ENCODE measurements at regions of chr18 and their contacts with region 1.

Region 1: DNA sequence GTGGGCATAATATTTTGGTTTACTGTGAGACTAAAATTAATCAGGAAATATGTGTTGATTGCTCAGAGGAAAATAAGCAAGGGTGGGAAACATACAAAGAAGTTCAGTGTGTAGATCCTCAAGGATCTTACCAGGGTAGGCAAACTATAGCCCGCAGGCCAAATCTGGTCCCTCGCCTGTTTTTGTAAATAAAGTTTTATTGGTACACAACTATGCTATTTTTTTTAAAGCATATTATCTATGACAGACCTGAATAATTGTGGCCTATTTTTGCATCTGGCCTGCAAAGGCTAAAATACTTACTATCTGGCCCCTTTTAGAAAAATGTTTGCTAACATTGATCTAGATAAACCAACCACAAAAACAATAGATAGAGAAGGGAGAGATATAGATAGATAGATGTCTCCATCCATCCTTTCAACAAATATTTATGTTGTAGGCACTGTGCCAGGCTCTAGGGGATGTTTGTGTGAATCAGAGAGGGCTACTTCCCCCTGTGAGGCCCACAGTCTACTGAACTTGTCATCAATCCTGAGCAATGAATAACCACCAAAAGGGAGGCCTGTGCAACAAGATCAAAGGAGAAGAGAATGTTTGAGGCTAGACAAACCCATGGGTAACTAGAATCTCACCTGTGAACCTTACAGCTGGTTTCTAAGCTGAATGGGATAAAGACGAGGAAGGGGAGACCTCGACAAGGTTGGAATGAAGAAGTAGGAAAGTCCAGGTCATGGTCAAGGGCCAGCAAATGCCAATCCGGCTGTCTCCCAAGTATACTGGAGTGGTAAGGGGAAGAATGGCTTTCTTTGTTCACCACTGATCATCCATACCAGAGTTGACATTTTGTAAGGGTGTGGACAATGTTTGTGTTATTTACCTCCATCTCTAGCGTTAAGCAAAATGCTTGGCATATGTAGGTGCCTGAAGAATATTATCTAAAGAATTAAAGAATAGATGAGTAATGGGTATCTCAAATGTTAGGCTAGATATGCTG is 23.6 kb downstream of the ALPK2 start:
- DNase-seq: peak; percentile 76
- ATAC-seq: peak; percentile 84
- H3K4me3 Mint-ChIP-seq: no peak overlapping the region
- H3K27ac Mint-ChIP-seq: peak overlapping the region; percentile 35
- H3K4me1 Mint-ChIP-seq: peaks cover 56% of the 10 kb centered on the region
- H3K27me3 Mint-ChIP-seq: peaks cover 4% of the 10 kb centered on the region

Region 2: GRCh38 chr18:57943723-57944122 is 661.6 kb before region 1 on chr18:
- CTCF ChIA-PET with region 1: no interaction called
- POLR2A ChIA-PET with region 1: no interaction called
- intact Hi-C with region 1: no loop called
- DNase-seq: no peak
- ATAC-seq: no peak
- H3K4me3 Mint-ChIP-seq: no peak overlapping the region
- H3K27ac Mint-ChIP-seq: no peak overlapping the region
- H3K4me1 Mint-ChIP-seq: no peaks in the 10 kb centered on the region
- H3K27me3 Mint-ChIP-seq: peaks cover 13% of the 10 kb centered on the region

Region 3: DNA sequence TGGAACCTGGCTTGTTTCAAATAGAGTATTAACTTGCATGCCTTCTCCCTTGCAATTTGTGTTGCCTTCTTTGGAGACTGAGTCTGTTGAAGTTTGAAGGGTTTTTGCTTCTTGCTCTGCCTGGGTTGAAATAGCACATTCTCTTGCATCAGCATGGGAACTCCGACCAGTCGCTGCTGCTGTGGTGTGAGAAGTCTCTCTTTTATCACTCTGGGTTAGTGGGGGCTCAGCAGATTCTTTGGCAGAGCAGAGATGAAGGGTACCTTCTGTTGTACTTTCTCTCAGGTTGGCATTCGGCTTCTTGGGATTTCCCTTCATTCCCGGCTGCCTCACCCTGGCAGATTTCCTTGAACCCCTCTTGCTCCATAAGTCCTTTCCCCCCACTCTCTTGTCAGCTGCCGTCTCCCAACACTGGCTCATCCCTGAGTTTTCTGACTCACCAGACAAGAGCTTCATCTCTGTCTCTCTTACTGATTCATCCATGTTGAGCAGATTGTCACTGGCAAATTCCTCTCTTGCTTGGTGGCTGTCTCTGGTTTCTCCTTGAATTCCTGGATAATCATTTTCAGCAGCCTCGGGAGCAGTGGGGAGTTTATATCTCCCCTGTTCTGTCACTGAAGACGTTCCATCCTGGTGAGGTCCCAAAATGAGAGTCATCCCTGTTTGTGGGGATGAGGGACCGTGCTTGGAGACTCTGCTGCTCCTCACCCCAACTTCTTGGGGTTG is 26.3 kb before region 1 on chr18:
- CTCF ChIA-PET with region 1: no interaction called
- POLR2A ChIA-PET with region 1: no interaction called
- intact Hi-C with region 1: loop called in 1 of 2 experiments (anchors 2 kb)
- DNase-seq: peak; percentile 33
- ATAC-seq: peak; percentile 42
- H3K4me3 Mint-ChIP-seq: peak overlapping the region; percentile 44
- H3K27ac Mint-ChIP-seq: peak overlapping the region; percentile 60
- H3K4me1 Mint-ChIP-seq: peaks cover 20% of the 10 kb centered on the region
- H3K27me3 Mint-ChIP-seq: no peaks in the 10 kb centered on the region

Region 4: GRCh38 chr18:58687871-58688308 is 82.6 kb after region 1 on chr18:
- CTCF ChIA-PET with region 1: interaction called, 3 read pairs
- POLR2A ChIA-PET with region 1: no interaction called
- intact Hi-C with region 1: loop called in 1 of 2 experiments (anchors 2 kb)
- DNase-seq: peak; percentile 69
- ATAC-seq: peak; percentile 79
- H3K4me3 Mint-ChIP-seq: peak overlapping the region; percentile 64
- H3K27ac Mint-ChIP-seq: peak overlapping the region; percentile 92
- H3K4me1 Mint-ChIP-seq: peaks cover 83% of the 10 kb centered on the region
- H3K27me3 Mint-ChIP-seq: no peaks in the 10 kb centered on the region

Region 5: DNA sequence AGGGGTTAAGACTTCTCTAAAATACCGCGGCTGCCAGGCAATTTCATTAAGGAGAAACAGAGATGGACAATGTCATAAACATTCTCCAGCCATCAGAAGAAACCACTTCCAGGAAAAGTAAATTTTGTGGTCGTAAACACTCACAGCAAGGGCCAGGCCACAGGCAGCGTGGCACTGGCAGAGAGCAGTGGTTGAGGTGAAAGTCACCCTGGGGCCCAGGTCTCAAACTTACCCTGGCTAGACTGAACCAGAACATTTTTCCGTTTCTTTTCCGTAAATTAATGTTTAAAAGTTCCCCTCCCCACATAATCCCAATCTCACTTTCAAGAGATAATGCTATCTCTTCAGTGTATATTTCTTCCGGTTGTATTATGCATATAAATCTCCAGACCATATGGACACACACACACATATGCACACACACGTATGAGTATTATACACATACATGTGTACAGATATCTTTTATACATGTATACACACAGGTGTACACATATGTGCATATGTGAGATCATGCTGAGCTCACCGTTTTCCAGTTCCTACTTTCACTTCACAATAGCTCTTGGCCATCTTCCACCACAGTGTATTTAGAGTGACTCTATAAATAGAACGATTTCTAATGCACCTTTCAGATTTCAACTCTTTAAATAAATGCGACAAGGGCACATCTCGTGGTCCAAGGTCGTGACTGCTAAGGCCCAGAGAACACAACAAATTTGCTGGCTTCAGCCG is 156.1 kb after region 1 on chr18:
- CTCF ChIA-PET with region 1: interaction called, 3 read pairs
- POLR2A ChIA-PET with region 1: no interaction called
- intact Hi-C with region 1: loop called in 1 of 2 experiments (anchors 5 kb)
- DNase-seq: peak; percentile 27
- ATAC-seq: peak; percentile 53
- H3K4me3 Mint-ChIP-seq: no peak overlapping the region
- H3K27ac Mint-ChIP-seq: peak overlapping the region; percentile 2
- H3K4me1 Mint-ChIP-seq: peaks cover 13% of the 10 kb centered on the region
- H3K27me3 Mint-ChIP-seq: peaks cover 18% of the 10 kb centered on the region

Region 6: GRCh38 chr18:59035591-59035990 is 430.3 kb after region 1 on chr18:
- CTCF ChIA-PET with region 1: no interaction called
- POLR2A ChIA-PET with region 1: no interaction called
- intact Hi-C with region 1: loop called in 1 of 2 experiments (anchors 1 kb)
- DNase-seq: no peak
- ATAC-seq: no peak
- H3K4me3 Mint-ChIP-seq: no peak overlapping the region
- H3K27ac Mint-ChIP-seq: no peak overlapping the region
- H3K4me1 Mint-ChIP-seq: peaks cover 20% of the 10 kb centered on the region
- H3K27me3 Mint-ChIP-seq: peaks cover 9% of the 10 kb centered on the region

Measured in activated CD4-positive, alpha-beta T cell treated with anti-CD3 and anti-CD28 coated beads for 36 hours (primary cell).